ENCODE measurements at regions of chr12 and their contacts with region 1.

Region 1: DNA sequence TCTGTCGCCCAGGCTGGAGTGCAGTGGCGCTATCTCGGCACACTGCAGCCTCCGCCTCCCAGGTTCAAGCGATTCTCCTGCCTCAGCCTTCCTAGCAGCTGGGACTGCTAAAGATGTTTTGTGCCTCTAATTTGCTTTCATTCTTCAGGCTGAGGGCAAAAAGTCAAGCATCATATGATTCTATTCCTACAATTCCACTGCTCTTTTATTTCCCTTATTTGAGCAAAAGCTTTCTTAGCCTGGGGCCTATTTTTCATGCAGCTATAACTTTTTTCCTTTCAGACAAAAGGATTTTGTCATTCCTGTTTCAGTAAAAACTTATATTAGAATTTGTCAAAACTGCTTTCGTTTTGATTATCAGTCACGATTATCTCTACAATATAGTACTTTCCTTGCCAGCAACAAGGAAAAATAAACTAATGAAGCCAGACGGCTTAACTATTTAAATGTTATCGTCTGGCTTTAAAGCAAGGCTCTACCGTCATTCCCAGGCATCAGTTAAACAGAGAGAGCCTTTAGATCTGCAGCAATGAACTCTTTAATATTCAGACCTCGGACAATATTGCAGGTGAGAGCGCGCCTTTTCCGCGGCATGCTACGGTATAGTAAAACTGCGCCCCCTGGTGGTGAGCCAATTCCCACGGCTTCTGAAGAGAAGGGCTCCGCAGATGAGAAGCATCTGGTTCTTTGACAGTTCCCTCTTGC is 1.4 kb upstream of the SLC2A13 start:
- DNase-seq: peak; percentile 56
- H3K27ac ChIP-seq: no peak overlapping the region
- CTCF ChIP-seq: peak; percentile 88

Region 2: GRCh38 chr12:40010899-40011774 is 96.1 kb before region 1 on chr12:
- CTCF ChIA-PET with region 1: interaction called, 25 read pairs
- POLR2A ChIA-PET with region 1: no interaction called
- DNase-seq: peak; percentile 52
- H3K27ac ChIP-seq: no peak overlapping the region
- CTCF ChIP-seq: peak; percentile 70